Lower lobe of right lung (tissue), 2 donors: ENCODE measurements at regions of chr9 and their contacts with region 1.

Region 1: GRCh38 chr9:116737152-116737546 is 50.0 kb downstream of the TRIM32 start:
- DNase-seq: peak; percentile 82
- ATAC-seq: peak; percentile 78 to 86
- H3K4me3 ChIP-seq: no peak overlapping the region
- H3K27ac ChIP-seq: no peak overlapping the region
- H3K4me1 ChIP-seq: no peaks in the 10 kb centered on the region
- H3K27me3 ChIP-seq: no peaks in the 10 kb centered on the region
- CTCF ChIP-seq: peak; percentile 91

Region 2: GRCh38 chr9:116674210-116674980 is 62.8 kb before region 1 on chr9:
- intact Hi-C with region 1: no loop called
- DNase-seq: no peak
- ATAC-seq: no peak
- H3K4me3 ChIP-seq: no peak overlapping the region
- H3K27ac ChIP-seq: no peak overlapping the region
- H3K4me1 ChIP-seq: no peaks in the 10 kb centered on the region
- H3K27me3 ChIP-seq: no peaks in the 10 kb centered on the region
- CTCF ChIP-seq: no peak

Region 3: DNA sequence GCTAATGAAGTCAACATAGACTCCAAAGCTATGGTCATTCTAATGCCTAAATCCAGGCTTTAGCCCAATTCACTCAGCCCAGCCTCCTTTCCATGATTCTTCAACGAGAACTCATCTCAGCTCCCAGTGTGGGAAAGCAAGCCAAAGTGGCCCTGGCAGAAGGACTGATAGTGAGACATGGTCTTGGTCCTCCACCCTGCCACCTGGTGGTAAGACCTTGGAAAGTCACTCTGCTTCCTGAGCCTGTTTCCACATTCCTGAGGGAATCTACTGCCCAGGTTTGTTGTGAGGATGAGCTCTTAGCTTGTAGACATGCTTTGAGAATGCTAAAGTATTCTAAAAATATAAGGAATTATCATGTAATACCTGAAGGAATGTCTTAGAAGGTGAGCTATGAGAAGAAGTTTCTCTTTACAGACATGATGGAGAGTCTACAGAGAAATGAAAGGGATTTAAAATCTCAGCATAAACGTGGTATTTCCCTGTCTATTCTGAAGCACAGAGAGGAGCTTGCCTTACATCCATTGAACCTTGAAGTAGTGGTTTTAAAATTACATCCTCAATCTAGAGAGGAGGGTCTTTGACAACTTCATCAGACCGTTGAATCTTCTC is 123.5 kb after region 1 on chr9:
- intact Hi-C with region 1: loop called (anchors 10 kb)
- DNase-seq: peak; percentile 52
- ATAC-seq: peak; percentile 72 to 74
- H3K4me3 ChIP-seq: no peak overlapping the region
- H3K27ac ChIP-seq: no peak overlapping the region
- H3K4me1 ChIP-seq: no peaks in the 10 kb centered on the region
- H3K27me3 ChIP-seq: no peaks in the 10 kb centered on the region
- CTCF ChIP-seq: peak; percentile 77